Sigmoid colon (tissue), 7 donors: ENCODE measurements at regions of chr1 and their contacts with region 1.

Region 1: DNA sequence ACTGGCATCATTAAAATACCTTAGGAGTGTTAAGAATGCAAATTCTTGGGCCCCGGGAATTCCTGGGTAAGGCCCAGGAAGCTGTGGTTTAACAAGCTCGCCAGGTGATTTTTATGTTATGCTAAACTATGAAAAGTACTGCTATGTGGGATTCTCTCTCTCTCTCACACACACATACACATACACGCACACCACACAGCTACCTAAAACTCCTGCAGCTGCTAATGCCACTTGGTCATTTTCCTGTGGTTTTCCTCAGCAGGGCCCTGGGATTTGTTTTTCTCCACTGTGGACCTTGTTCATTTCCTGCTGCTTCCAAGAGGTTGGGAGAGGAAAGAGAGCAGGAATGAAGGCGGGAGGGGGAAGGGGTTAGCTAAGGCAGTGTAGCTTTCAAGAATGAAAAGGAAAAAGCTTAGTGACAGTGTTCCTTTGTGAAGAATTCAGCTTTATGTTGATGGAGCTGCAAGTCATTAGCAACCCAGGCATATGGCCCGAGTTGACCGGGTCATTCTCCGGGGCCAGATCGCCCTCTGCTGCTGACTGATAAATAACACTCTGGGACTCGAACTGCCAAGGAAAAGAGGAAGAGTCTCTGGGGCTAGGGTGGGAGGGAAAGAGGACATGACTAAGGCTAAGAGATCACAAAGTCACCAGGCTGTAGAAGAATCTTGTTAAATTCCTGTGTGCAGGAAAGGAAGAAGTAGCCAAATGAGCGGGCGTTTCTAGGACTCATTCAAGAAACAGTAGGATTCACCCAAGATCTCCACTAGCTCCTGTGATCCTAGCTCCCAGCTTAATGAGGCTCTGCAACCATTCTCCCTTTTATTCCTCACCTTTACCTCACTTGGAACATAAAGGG is 30.5 kb upstream of the LRIG2 start:
- DNase-seq: peak; percentile 84
- H3K4me3 ChIP-seq: no peak overlapping the region
- H3K27ac ChIP-seq: peak overlapping the region in 1 of 4 donors; percentile 39
- H3K4me1 ChIP-seq: peaks cover 0 to 14% (median 10%) of the 10 kb centered on the region in 4 donors
- H3K27me3 ChIP-seq: no peaks in the 10 kb centered on the region
- CTCF ChIP-seq: peak; percentile 51 to 67 (median 60)
- EP300 ChIP-seq: no peak
- POLR2A ChIP-seq: no peak

Region 2: DNA sequence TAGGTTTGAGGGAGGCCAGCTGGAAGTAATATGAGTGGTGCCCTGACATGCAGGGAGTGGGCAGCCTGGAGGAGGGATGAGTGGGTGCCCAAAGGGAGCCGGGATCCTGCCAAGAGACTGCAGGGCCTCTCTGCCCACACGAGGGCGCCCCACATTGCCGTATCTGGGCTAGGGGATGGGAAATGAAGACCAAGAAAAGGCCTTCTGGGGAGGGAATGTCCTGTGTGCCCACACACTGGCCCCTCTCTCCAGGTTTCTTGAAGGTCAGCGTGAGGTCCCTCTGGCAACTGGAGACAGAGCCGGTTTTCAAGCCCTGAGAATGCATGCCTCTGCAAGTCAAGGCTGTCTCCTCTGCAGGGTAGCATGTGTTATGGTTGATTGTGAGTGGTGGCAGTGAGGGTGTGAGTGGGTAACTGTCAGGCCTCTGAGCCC is 233.2 kb before region 1 on chr1:
- intact Hi-C with region 1: loop called (anchors 5 kb)
- DNase-seq: peak; percentile 74
- H3K4me3 ChIP-seq: no peak overlapping the region
- H3K27ac ChIP-seq: no peak overlapping the region
- H3K4me1 ChIP-seq: no peaks in the 10 kb centered on the region
- H3K27me3 ChIP-seq: no peaks in the 10 kb centered on the region
- CTCF ChIP-seq: peak; percentile 14 to 64 (median 60)
- EP300 ChIP-seq: no peak
- POLR2A ChIP-seq: no peak

Region 3: DNA sequence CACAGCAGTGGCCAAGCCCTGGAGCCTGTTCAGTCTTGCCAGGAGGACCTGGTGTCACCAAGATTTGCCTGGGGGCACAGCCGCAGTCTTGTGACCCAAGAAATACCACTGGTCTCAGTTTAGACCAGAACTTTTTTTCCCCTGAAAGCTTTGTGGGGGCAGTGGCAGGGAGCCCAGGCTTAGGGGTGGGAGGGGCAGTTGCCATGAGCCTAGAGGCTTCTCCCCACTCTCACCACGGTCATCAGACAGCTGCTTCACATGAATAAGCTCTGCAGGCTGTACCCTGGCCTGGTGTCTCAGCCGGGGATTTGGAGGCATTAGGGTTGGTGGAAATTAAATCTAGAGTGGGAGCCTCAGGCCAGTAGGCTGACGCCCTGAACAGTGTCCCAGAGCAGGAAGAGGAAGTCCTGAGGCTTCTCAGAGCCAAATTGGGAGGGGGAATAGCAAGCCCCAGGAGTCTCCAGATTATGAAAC is 160.2 kb before region 1 on chr1:
- intact Hi-C with region 1: loop called (anchors 1 kb)
- DNase-seq: no peak
- H3K4me3 ChIP-seq: no peak overlapping the region
- H3K27ac ChIP-seq: no peak overlapping the region
- H3K4me1 ChIP-seq: no peaks in the 10 kb centered on the region
- H3K27me3 ChIP-seq: no peaks in the 10 kb centered on the region
- CTCF ChIP-seq: no peak
- EP300 ChIP-seq: no peak
- POLR2A ChIP-seq: no peak

Region 4: GRCh38 chr1:112998592-112999235 is 43.8 kb before region 1 on chr1:
- intact Hi-C with region 1: no loop called
- DNase-seq: peak; percentile 91
- H3K4me3 ChIP-seq: peak overlapping the region in 2 of 4 donors; percentile 0 to 10
- H3K27ac ChIP-seq: peak overlapping the region; percentile 75 to 85 (median 85)
- H3K4me1 ChIP-seq: peaks cover 0 to 65% (median 48%) of the 10 kb centered on the region in 4 donors
- H3K27me3 ChIP-seq: no peaks in the 10 kb centered on the region
- CTCF ChIP-seq: no peak
- EP300 ChIP-seq: no peak
- POLR2A ChIP-seq: no peak

Region 5: GRCh38 chr1:113429443-113430153 is 387.1 kb after region 1 on chr1:
- intact Hi-C with region 1: no loop called
- DNase-seq: no peak
- H3K4me3 ChIP-seq: no peak overlapping the region
- H3K27ac ChIP-seq: no peak overlapping the region
- H3K4me1 ChIP-seq: peaks cover 0 to 29% (median 9%) of the 10 kb centered on the region in 4 donors
- H3K27me3 ChIP-seq: no peaks in the 10 kb centered on the region
- CTCF ChIP-seq: no peak
- EP300 ChIP-seq: no peak
- POLR2A ChIP-seq: no peak